Astrocyte of the spinal cord (primary cell): ENCODE measurements at regions of chr16 and their contacts with region 1.

Region 1: GRCh38 chr16:53457670-53458069 is 23.4 kb downstream of the RBL2 start:
- DNase-seq: peak; percentile 15
- H3K4me3 ChIP-seq: no peak overlapping the region
- CTCF ChIP-seq: no peak

Region 2: DNA sequence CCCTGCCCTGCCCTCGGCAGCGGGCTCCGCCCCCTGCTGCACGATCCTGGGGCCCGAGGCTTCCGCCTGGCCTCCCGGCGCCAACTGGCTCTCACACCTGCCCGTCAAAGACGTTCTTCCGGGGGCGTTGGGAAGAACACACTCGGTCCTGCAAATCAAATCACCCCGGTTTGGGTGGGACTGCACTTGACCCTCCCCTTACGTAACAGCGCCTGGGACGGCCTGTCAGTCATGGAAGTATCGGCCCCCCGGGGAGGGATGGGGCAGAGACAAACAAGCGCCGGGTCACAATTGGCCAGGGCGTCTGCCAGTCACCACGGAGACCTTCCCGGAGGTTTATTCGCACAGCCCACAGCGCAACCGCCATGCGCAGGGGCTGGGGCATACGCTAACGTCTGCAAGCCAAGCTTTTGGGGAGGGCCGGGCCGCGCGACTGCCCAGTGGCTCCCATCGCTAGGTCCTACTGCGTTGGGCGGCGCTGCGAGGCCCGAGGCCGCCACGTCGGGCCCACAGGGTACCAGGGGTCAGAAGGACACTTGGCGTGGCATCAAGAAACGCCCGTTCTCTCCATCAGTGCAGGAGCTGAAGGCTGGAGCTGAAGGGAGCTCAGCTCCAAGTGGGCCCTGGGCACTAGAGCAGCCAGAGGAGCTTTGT is 45.7 kb after region 1 on chr16:
- in situ Hi-C with region 1: loop called (anchors 5 kb)
- DNase-seq: peak; percentile 100
- H3K4me3 ChIP-seq: peak overlapping the region; percentile 74
- CTCF ChIP-seq: no peak

Region 3: DNA sequence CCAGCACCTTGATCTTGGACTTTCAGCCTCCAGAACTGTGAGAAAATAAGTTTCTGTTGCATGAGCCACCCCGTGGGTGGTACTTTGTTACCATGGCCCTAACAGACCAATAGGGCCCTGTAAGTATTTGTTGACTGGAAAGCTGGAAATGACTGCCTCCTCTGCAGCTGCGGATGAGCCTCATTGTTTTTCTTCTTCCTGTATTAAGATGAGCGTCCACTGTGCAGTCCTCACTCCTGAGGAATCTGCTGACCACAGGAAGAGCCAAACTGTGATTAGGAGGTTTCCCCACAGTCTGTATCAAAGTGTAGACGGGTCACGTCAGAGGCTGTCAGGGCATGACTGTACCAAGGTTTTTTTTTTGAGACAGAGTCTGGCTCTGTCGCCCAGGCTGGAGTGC is 57.6 kb after region 1 on chr16:
- in situ Hi-C with region 1: no loop called
- DNase-seq: peak; percentile 28
- H3K4me3 ChIP-seq: no peak overlapping the region
- CTCF ChIP-seq: no peak